OCI-LY7 (cell line): ENCODE measurements at regions of chr13 and their contacts with region 1.

Region 1: GRCh38 chr13:101397742-101398141 is 18.6 kb downstream of the NALCN start:
- DNase-seq: no peak
- H3K4me3 ChIP-seq: no peak overlapping the region
- H3K27ac ChIP-seq: no peak overlapping the region
- H3K4me1 ChIP-seq: no peaks in the 10 kb centered on the region
- CTCF ChIP-seq: no peak

Region 2: GRCh38 chr13:101308247-101309013 is 89.3 kb before region 1 on chr13:
- CTCF ChIA-PET with region 1: interaction called, 15 read pairs
- POLR2A ChIA-PET with region 1: no interaction called
- intact Hi-C with region 1: no loop called
- DNase-seq: no peak
- H3K4me3 ChIP-seq: no peak overlapping the region
- H3K27ac ChIP-seq: no peak overlapping the region
- H3K4me1 ChIP-seq: no peaks in the 10 kb centered on the region
- CTCF ChIP-seq: no peak

Region 3: GRCh38 chr13:102234618-102235017 is 836.9 kb after region 1 on chr13:
- CTCF ChIA-PET with region 1: no interaction called
- POLR2A ChIA-PET with region 1: no interaction called
- intact Hi-C with region 1: no loop called
- DNase-seq: no peak
- H3K4me3 ChIP-seq: no peak overlapping the region
- H3K27ac ChIP-seq: no peak overlapping the region
- H3K4me1 ChIP-seq: no peaks in the 10 kb centered on the region
- CTCF ChIP-seq: no peak